CD8-positive, alpha-beta memory T cell (primary cell): ENCODE measurements at regions of chr3 and their contacts with region 1.

Region 1: GRCh38 chr3:128993461-128994173 is at the start of gene CFAP92:
- DNase-seq: peak; percentile 83 to 94 (median 89)
- H3K4me3 ChIP-seq: peak within 1 kb of the TSS; percentile 53
- H3K4me3 Mint-ChIP-seq: peak within 1 kb of the TSS; percentile 66 to 83 (median 77)
- H3K27ac ChIP-seq: no peak within 1 kb of the TSS
- H3K27ac Mint-ChIP-seq: peak within 1 kb of the TSS; percentile 50 to 96 (median 78)
- H3K4me1 ChIP-seq: peaks cover 23% of the 10 kb centered on the region
- H3K4me1 Mint-ChIP-seq: peaks cover 8 to 16% (median 9%) of the 10 kb centered on the region in 3 donors
- H3K27me3 ChIP-seq: no peaks in the 10 kb centered on the region
- H3K27me3 Mint-ChIP-seq: peaks cover 2 to 5% of the 10 kb centered on the region in 2 donors
- total RNA-seq, gene CFAP92: 0.13 TPM in 1 of 2 experiments, not detected in the other

Region 2: DNA sequence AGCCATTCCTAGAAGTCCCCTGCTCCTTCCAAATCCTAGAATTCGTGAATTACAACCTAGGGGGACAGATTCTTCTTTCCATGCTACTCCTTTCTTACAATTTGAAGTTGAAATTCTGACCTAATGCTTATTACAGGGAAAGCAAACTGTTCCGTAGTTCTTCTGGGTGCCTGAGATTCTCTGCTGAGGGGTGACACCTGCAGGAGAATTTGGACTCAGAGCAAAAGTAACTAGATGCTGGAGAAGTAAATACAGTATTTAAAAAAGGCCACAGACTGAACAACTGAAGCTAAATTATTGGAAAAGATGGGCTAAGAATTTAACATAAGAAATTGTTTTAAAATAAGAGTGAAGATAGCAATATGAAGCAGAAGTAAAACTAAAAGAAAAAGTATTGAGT is 76.3 kb before region 1 on chr3:
- CTCF ChIA-PET with region 1: no interaction called
- POLR2A ChIA-PET with region 1: no interaction called
- DNase-seq: no peak
- H3K4me3 ChIP-seq: no peak overlapping the region
- H3K4me3 Mint-ChIP-seq: no peak overlapping the region
- H3K27ac ChIP-seq: no peak overlapping the region
- H3K27ac Mint-ChIP-seq: peak overlapping the region in 6 of 8 donors; percentile 13 to 86 (median 64)
- H3K4me1 ChIP-seq: peaks cover 3% of the 10 kb centered on the region
- H3K4me1 Mint-ChIP-seq: peaks cover 3 to 10% (median 9%) of the 10 kb centered on the region in 3 donors
- H3K27me3 ChIP-seq: no peaks in the 10 kb centered on the region
- H3K27me3 Mint-ChIP-seq: no peaks in the 10 kb centered on the region

Region 3: DNA sequence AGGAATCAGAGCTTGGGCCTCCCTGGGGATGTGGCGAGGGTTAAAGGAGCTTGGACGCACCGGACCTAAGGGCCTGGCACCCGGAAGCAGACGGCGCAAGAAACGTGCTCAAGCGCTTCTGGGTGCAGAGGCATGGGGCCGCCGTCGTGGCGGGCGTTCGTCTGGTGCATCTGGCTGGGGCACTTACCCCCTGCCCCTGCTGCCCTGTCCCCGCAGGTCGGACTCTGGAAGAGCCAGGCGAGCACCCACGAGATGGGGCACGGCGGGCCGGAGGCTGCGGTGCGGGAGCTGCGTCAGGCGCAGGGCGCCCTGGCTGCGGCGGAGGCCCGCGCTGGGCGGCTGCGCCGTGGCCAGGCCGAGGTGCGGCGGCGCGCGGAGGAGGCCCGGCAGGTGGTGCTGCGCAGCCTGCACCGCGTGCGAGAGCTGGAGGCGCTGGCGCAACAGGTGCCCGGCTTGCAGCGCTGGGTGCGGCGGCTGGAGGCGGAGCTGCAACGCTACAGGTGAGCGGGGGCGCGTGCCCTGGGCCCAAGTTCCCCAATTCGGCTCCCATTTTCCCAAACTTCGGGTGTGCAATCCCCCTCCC is 10.1 kb after region 1 on chr3:
- CTCF ChIA-PET with region 1: interaction called, 11 read pairs
- POLR2A ChIA-PET with region 1: interaction called, 8 read pairs
- DNase-seq: peak; percentile 26 to 70 (median 55)
- H3K4me3 ChIP-seq: no peak overlapping the region
- H3K4me3 Mint-ChIP-seq: peak overlapping the region in 5 of 7 donors; percentile 29 to 63 (median 48)
- H3K27ac ChIP-seq: no peak overlapping the region
- H3K27ac Mint-ChIP-seq: peak overlapping the region in 1 of 8 donors; percentile 38
- H3K4me1 ChIP-seq: peaks cover 16% of the 10 kb centered on the region
- H3K4me1 Mint-ChIP-seq: peaks cover 23 to 43% (median 30%) of the 10 kb centered on the region in 3 donors
- H3K27me3 ChIP-seq: peaks cover 14% of the 10 kb centered on the region
- H3K27me3 Mint-ChIP-seq: peaks cover 32 to 33% of the 10 kb centered on the region in 2 donors